Activated CD4-positive, alpha-beta memory T cell treated with anti-CD3 and anti-CD28 coated beads for 36 hours (primary cell): ENCODE measurements at regions of chr12 and their contacts with region 1.

Region 1: GRCh38 chr12:9244894-9245293 is 36.7 kb upstream of the PZP start:
- DNase-seq: peak; percentile 89
- H3K4me3 Mint-ChIP-seq: peak overlapping the region; percentile 6
- H3K27ac Mint-ChIP-seq: peak overlapping the region; percentile 82
- H3K4me1 Mint-ChIP-seq: peaks cover 52% of the 10 kb centered on the region
- H3K27me3 Mint-ChIP-seq: peaks cover 3% of the 10 kb centered on the region

Region 2: DNA sequence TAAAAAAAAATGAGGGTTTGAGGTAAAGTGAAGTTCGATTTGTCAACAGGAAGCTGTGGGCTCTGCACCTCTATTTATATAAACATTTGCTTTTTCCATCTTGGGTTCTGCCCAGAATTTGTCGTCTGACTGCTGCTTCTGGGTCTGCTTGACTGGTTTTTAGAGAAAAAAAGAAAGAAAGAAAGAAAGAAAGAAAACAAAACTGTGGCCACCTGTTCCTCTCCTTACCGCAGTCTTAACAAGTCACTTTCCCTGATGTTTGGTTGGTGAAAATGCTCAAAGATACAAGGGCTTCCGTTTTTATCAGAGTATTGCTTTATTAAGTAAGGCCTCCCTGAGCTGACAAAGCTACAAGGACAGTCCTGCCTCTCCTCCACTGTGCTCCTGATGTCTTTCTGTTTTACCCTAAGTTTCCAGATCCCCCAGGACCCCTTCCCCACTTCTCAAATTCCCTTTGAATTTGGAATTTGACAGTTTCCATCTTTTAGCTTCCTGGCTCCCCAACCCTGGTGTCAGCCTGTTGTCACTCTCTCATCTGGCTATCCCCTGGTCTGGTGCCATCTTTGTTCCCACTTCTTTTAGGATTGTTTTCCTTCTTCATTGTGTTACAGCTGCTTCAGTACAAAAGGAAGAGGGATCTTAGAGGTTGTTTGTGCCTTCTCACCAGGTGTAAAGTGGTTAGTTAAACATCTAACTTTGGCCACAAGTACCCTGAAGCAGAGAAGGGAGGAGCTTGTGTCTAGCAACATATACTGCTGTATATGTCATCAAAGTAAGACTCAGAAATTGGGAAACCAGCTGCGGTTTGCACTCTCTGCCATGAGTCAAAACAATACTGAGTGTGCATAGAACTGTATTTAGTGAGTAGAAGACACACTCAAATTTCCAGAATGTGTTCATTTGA is 600.3 kb before region 1 on chr12:
- CTCF ChIA-PET with region 1: no interaction called
- POLR2A ChIA-PET with region 1: no interaction called
- intact Hi-C with region 1: loop called (anchors 2 kb)
- DNase-seq: peak; percentile 84
- H3K4me3 Mint-ChIP-seq: peak overlapping the region; percentile 6
- H3K27ac Mint-ChIP-seq: peak overlapping the region; percentile 43
- H3K4me1 Mint-ChIP-seq: peaks cover 44% of the 10 kb centered on the region
- H3K27me3 Mint-ChIP-seq: peaks cover 10% of the 10 kb centered on the region

Region 3: DNA sequence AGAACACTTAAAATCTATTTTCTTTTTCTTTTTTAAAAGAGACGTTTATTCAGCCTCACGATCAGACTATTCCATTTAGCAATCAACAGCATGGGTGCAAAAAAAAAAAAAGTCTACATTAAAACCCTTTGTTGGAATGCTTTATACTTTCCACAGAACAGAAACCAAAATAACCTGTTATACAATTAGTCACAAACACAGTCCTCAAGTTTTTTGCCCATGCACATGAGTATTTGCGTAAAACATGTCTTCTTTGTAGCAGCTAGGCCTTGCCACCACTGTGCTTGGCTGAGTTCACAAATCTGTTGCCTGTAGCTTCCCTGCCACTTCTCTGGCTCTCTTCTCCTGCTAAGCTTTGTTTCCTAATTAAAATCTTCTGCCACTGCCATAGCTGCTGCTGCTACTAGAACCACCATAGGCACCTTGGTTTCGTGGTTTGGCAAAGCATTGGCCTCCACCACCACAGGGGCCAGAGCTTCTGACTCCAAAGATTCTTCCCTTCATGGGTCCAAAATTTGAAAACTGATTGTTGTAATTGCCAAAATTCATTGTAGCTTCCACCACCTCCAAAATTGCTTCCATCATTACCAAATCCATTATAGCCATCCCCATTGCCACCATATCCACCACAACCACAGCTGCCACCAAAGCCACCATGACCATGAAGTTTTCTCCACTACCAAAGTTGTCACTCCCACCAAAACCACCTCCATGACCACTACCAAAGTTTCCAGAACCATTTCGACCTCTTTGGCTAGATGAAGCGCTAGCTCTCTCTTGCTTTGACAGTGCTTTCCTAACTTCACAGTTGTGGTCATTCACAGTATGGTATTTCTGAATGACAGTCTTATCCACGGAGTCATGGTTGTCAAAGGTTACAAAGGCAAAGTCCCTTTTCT is 217.5 kb before region 1 on chr12:
- CTCF ChIA-PET with region 1: interaction called, 3 read pairs
- POLR2A ChIA-PET with region 1: no interaction called
- intact Hi-C with region 1: loop called (anchors 1 kb)
- DNase-seq: peak; percentile 74
- H3K4me3 Mint-ChIP-seq: peak overlapping the region; percentile 64
- H3K27ac Mint-ChIP-seq: peak overlapping the region; percentile 87
- H3K4me1 Mint-ChIP-seq: peaks cover 36% of the 10 kb centered on the region
- H3K27me3 Mint-ChIP-seq: peaks cover 2% of the 10 kb centered on the region

Region 4: GRCh38 chr12:9103050-9103849 is 141.6 kb before region 1 on chr12:
- CTCF ChIA-PET with region 1: no interaction called
- POLR2A ChIA-PET with region 1: no interaction called
- intact Hi-C with region 1: loop called (anchors 2 kb)
- DNase-seq: no peak
- H3K4me3 Mint-ChIP-seq: no peak overlapping the region
- H3K27ac Mint-ChIP-seq: no peak overlapping the region
- H3K4me1 Mint-ChIP-seq: peaks cover 27% of the 10 kb centered on the region
- H3K27me3 Mint-ChIP-seq: no peaks in the 10 kb centered on the region

Region 5: GRCh38 chr12:9198012-9198411 is 46.9 kb before region 1 on chr12:
- CTCF ChIA-PET with region 1: no interaction called
- POLR2A ChIA-PET with region 1: no interaction called
- intact Hi-C with region 1: loop called (anchors 1 kb)
- DNase-seq: no peak
- H3K4me3 Mint-ChIP-seq: no peak overlapping the region
- H3K27ac Mint-ChIP-seq: no peak overlapping the region
- H3K4me1 Mint-ChIP-seq: no peaks in the 10 kb centered on the region
- H3K27me3 Mint-ChIP-seq: no peaks in the 10 kb centered on the region

Region 6: DNA sequence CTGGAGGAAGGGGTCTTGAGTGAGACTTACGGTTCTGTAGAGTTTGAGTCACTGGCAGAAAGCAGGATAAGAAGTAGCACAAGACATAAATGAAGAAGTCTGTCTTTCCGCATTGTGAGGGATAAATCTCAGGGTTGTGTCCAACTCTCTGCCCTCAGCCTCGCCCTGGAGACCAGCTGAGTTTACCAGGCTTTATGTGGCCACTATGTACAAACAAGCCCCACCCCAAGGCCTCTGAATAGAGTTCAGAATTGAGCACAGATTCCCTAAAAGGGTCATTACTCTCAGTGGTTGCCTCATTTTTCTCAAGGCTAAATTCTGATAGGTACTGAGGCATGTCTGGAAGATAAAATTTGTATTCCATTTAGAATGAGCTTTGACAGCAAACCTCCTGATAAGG is 36.7 kb before region 1 on chr12 and contains the start of gene PZP:
- CTCF ChIA-PET with region 1: no interaction called
- POLR2A ChIA-PET with region 1: no interaction called
- intact Hi-C with region 1: no loop called
- DNase-seq: no peak
- H3K4me3 Mint-ChIP-seq: no peak within 1 kb of the TSS
- H3K27ac Mint-ChIP-seq: no peak within 1 kb of the TSS
- H3K4me1 Mint-ChIP-seq: no peaks in the 10 kb centered on the region
- H3K27me3 Mint-ChIP-seq: no peaks in the 10 kb centered on the region
- total RNA-seq, gene PZP: not detected

Region 7: DNA sequence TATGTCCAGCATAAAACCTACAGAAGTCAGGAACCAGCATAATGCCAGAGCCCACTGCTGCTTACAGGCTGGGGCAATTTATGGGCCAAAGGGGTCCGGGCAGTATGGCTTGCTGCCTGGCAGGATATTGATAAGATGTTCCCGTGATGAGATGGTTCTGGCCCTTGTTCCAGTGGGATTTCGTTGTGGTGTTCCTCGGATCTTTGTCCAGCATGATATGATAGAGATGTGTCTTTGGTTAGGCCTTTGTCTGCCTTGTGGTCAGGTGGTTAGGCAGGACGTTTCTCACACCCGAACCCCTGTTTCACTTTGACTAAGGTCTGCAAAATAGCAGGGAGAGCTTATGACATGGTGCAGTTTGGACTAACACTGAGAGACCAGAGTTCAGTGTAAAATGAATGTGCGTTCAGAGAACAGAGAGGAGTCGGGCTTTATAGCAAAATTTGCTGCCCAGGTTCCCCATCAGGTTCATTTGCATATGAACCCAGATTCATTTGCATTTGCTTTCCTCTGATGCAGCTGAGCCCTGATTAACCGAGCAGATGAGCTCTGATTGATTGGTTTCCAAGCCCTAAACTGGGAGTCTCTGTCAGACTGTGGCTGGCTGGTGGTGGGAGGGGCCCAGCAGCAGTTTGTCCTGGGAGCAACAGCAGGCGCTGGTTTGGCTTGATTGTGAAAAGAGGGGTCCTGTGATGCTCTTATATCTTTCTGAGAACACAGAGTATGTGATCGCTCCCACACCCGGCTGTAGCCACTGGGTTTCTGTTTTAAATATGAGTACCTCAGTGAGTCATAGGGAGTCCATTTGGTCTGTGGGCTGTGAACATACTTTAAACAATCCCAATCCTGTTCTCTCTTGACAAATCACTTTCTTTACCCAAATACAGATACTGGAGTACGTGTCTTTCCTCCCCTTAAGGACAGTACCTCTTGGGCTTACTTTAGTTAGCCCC is 119.6 kb after region 1 on chr12:
- CTCF ChIA-PET with region 1: no interaction called
- POLR2A ChIA-PET with region 1: no interaction called
- intact Hi-C with region 1: loop called (anchors 2 kb)
- DNase-seq: peak; percentile 73
- H3K4me3 Mint-ChIP-seq: peak overlapping the region; percentile 6
- H3K27ac Mint-ChIP-seq: peak overlapping the region; percentile 33
- H3K4me1 Mint-ChIP-seq: peaks cover 42% of the 10 kb centered on the region
- H3K27me3 Mint-ChIP-seq: peaks cover 25% of the 10 kb centered on the region

Region 8: GRCh38 chr12:9797722-9798619 is 553.1 kb after region 1 on chr12:
- CTCF ChIA-PET with region 1: no interaction called
- POLR2A ChIA-PET with region 1: no interaction called
- intact Hi-C with region 1: loop called (anchors 10 kb)
- DNase-seq: peak; percentile 77
- H3K4me3 Mint-ChIP-seq: no peak overlapping the region
- H3K27ac Mint-ChIP-seq: peak overlapping the region; percentile 54
- H3K4me1 Mint-ChIP-seq: peaks cover 44% of the 10 kb centered on the region
- H3K27me3 Mint-ChIP-seq: no peaks in the 10 kb centered on the region